H1 (cell line): ENCODE measurements at regions of chr1 and their contacts with region 1.

Region 1: DNA sequence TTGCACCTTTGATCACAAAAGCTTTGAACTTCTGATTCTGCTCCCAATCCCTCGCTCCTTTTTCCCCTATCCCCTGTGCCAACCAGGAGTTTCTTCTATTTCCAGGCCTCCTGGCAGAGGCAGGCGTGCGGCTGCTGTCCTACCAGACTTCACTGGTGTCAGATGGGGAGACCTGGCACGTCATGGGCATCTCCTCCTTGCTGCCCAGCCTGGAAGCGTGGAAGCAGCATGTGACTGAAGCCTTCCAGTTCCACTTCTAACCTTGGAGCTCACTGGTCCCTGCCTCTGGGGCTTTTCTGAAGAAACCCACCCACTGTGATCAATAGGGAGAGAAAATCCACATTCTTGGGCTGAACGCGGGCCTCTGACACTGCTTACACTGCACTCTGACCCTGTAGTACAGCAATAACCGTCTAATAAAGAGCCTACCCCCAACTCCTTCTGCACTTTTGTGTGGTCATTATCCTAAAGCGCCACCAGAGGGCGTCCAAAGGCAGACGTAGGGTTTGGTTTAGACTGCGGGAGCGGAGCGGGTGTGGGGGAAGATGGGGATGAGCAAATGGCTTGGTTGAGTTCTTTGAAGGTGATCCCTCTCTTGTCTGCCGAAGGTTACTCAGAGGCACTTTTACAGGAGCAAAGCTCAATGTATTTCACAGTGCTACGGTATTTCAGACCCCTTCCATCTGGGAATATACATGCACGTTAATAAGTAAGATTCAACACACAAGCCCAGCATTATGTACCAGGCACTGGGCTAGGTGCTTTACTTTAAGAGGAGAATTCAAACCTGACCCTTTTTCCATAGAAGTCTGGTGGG is 24.7 kb downstream of the HMGCS2 start:
- DNase-seq: peak; percentile 49 to 77
- H3K4me3 ChIP-seq: no peak overlapping the region
- H3K27ac ChIP-seq: no peak overlapping the region
- H3K4me1 ChIP-seq: peaks cover 0 to 8% (median 5%) of the 10 kb centered on the region in 4 experiments; a peak in 2 of 7 replicates
- H3K27me3 ChIP-seq: no peaks in the 10 kb centered on the region
- CTCF ChIP-seq: peak; percentile 70 to 89 (median 88)
- EP300 ChIP-seq: no peak
- POLR2A ChIP-seq: peak in 1 of 2 experiments; percentile 39; a peak in 2 of 3 replicates
- RAD21 ChIP-seq: peak; percentile 83 to 88

Region 2: GRCh38 chr1:119613769-119614720 is 129.9 kb before region 1 on chr1:
- CTCF ChIA-PET with region 1: interaction called, 23 read pairs
- POLR2A ChIA-PET with region 1: interaction called, 4 read pairs
- DNase-seq: peak; percentile 69 to 96
- H3K4me3 ChIP-seq: no peak overlapping the region
- H3K27ac ChIP-seq: no peak overlapping the region
- H3K4me1 ChIP-seq: peaks cover 0 to 3% (median under 1%) of the 10 kb centered on the region in 4 experiments; a peak in 5 of 7 replicates
- H3K27me3 ChIP-seq: no peaks in the 10 kb centered on the region
- CTCF ChIP-seq: peak; percentile 62 to 94 (median 80)
- EP300 ChIP-seq: no peak
- POLR2A ChIP-seq: no peak
- RAD21 ChIP-seq: peak; percentile 92 to 97

Region 3: GRCh38 chr1:119711804-119712341 is 32.1 kb before region 1 on chr1 and contains the start of gene PHGDH:
- CTCF ChIA-PET with region 1: interaction called, 26 read pairs
- POLR2A ChIA-PET with region 1: interaction called, 425 read pairs
- DNase-seq: peak in 1 of 2 experiments; percentile 83
- H3K4me3 ChIP-seq: peak within 1 kb of the TSS; percentile 85 to 99 (median 99)
- H3K27ac ChIP-seq: peak within 1 kb of the TSS; percentile 89
- H3K4me1 ChIP-seq: peaks cover 14 to 32% (median 20%) of the 10 kb centered on the region in 4 experiments
- H3K27me3 ChIP-seq: no peaks in the 10 kb centered on the region
- CTCF ChIP-seq: no peak
- EP300 ChIP-seq: no peak
- POLR2A ChIP-seq: peak; percentile 88 to 99
- RAD21 ChIP-seq: no peak
- total RNA-seq, gene PHGDH: 674 and 687 TPM in 2 replicates

Region 4: DNA sequence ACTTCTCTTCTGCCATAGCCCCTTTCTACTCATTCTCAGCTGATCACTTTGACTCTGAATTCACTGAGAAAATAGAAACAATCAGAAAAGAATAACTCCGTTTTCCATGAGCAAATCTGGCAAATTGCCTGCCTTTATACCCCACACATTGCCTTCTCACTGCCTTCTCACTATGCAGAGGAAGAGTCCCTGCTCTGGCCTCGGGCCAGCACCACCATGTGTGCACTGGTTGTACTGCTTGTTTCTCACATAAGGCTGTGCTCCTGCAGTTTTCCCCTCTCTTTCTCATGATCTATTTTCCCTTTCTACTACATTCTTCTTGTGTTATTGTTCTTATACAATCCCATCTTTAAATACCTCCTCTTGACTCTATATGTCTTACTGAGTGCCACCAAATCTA is 27.0 kb after region 1 on chr1:
- CTCF ChIA-PET with region 1: interaction called, 67 read pairs
- POLR2A ChIA-PET with region 1: interaction called, 11 read pairs
- DNase-seq: no peak
- H3K4me3 ChIP-seq: no peak overlapping the region
- H3K27ac ChIP-seq: no peak overlapping the region
- H3K4me1 ChIP-seq: peaks cover 0 to 5% (median 1%) of the 10 kb centered on the region in 4 experiments; a peak in 1 of 7 replicates
- H3K27me3 ChIP-seq: no peaks in the 10 kb centered on the region
- CTCF ChIP-seq: peak; percentile 47 to 52 (median 50)
- EP300 ChIP-seq: no peak
- POLR2A ChIP-seq: no peak
- RAD21 ChIP-seq: peak; percentile 33 to 47; a peak in 3 of 4 replicates

Region 5: GRCh38 chr1:119808972-119809550 is 65.1 kb after region 1 on chr1:
- CTCF ChIA-PET with region 1: interaction called, 18 read pairs
- POLR2A ChIA-PET with region 1: interaction called, 8 read pairs
- DNase-seq: peak; percentile 47 to 78
- H3K4me3 ChIP-seq: no peak overlapping the region
- H3K27ac ChIP-seq: no peak overlapping the region
- H3K4me1 ChIP-seq: no peaks in the 10 kb centered on the region
- H3K27me3 ChIP-seq: peaks cover 0 to 1% (median 0%) of the 10 kb centered on the region in 4 experiments; a peak in 3 of 7 replicates
- CTCF ChIP-seq: peak; percentile 79 to 91 (median 87)
- EP300 ChIP-seq: no peak
- POLR2A ChIP-seq: no peak
- RAD21 ChIP-seq: peak; percentile 71 to 78

Region 6: DNA sequence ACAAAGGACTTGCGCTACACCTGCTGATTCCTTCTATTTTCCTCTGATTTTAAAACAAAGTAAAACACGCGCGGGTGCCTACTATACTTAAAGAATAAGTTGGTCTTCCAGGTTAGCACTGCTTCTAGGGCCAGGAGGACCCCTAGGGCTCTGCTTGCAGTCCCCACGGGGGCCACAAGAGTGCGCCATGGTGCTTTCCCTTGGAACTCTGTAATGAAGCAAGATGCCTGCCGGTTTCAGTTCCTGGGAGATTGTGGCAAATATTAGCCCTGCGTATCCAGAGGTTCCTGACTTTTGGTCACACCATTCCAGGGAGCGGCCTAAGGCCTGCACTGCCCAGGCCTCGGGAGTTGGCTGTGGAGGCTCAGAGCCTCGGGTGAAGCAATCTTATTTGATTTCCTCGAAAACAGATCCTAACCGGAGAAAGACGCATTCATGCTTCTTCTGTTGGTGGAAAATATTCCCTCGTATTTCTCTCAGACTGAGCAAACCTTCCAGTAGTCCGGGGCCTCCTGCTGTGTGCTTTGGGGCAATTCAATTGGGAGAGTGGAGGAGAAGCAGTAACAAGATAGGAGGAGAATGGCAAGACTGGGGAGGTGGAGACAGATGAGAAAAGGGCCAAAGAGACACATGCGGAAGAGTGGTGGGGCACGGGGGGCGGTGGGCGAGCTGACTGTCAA is 127.1 kb after region 1 on chr1:
- CTCF ChIA-PET with region 1: interaction called, 17 read pairs
- POLR2A ChIA-PET with region 1: no interaction called
- DNase-seq: peak; percentile 78 to 100
- H3K4me3 ChIP-seq: no peak overlapping the region
- H3K27ac ChIP-seq: no peak overlapping the region
- H3K4me1 ChIP-seq: no peaks in the 10 kb centered on the region
- H3K27me3 ChIP-seq: no peaks in the 10 kb centered on the region; a peak in 1 of 7 replicates
- CTCF ChIP-seq: peak; percentile 89 to 94 (median 93)
- EP300 ChIP-seq: no peak
- POLR2A ChIP-seq: no peak
- RAD21 ChIP-seq: peak; percentile 92 to 96

Region 7: DNA sequence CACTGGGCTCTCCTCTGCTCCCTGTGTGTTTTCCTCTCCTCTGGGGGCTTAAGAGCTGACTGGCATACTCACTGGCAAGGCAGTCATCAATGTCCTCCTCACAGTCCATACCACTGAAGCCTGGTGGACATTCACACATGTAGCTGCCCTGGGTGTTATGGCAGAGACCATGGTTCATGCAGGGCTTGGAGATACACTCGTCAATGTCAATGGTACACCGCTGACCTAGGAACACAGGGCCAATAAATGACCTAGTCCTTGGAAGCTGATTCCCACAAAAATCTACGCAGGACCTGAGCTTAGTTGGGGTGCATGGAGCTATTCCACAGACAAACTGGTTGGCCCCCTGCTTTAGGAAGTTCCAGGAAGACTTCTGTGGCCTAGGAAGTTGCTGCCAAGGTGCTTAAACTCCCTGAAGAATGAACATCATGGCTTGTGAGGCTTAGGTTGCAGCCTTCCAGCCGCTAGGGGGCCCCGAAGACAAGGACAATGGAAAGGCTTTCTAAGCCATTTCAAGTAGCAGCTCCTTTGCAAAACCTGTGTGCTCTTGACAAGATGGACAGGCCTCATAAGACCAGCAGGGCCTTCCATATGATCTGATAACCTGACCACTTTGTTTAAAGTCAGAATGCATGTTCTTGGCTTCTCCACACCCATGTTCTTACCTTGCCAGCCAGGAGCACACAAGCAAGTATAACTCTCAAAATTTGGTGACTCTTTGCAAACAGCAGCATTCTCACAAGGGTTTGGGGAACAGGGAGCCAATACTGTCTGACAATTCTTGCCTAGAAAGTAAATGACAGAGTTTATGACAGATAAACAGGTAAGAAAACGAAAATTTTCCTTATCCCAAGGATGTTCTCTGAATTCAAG is 204.6 kb after region 1 on chr1:
- CTCF ChIA-PET with region 1: no interaction called
- POLR2A ChIA-PET with region 1: no interaction called
- DNase-seq: peak; percentile 57 to 86
- H3K4me3 ChIP-seq: no peak overlapping the region
- H3K27ac ChIP-seq: no peak overlapping the region
- H3K4me1 ChIP-seq: no peaks in the 10 kb centered on the region
- H3K27me3 ChIP-seq: no peaks in the 10 kb centered on the region
- CTCF ChIP-seq: peak; percentile 72 to 95 (median 89)
- EP300 ChIP-seq: no peak
- POLR2A ChIP-seq: no peak
- RAD21 ChIP-seq: peak; percentile 88 to 93